Mammary epithelial cell (primary cell): ENCODE measurements at regions of chr1 and their contacts with region 1.

Region 1: GRCh38 chr1:31259746-31260145 is 20.1 kb upstream of the NKAIN1 start:
- DNase-seq: no peak
- H3K4me3 ChIP-seq: no peak overlapping the region
- H3K27ac ChIP-seq: no peak overlapping the region
- H3K4me1 ChIP-seq: no peaks in the 10 kb centered on the region
- H3K27me3 ChIP-seq: no peaks in the 10 kb centered on the region
- CTCF ChIP-seq: no peak

Region 2: DNA sequence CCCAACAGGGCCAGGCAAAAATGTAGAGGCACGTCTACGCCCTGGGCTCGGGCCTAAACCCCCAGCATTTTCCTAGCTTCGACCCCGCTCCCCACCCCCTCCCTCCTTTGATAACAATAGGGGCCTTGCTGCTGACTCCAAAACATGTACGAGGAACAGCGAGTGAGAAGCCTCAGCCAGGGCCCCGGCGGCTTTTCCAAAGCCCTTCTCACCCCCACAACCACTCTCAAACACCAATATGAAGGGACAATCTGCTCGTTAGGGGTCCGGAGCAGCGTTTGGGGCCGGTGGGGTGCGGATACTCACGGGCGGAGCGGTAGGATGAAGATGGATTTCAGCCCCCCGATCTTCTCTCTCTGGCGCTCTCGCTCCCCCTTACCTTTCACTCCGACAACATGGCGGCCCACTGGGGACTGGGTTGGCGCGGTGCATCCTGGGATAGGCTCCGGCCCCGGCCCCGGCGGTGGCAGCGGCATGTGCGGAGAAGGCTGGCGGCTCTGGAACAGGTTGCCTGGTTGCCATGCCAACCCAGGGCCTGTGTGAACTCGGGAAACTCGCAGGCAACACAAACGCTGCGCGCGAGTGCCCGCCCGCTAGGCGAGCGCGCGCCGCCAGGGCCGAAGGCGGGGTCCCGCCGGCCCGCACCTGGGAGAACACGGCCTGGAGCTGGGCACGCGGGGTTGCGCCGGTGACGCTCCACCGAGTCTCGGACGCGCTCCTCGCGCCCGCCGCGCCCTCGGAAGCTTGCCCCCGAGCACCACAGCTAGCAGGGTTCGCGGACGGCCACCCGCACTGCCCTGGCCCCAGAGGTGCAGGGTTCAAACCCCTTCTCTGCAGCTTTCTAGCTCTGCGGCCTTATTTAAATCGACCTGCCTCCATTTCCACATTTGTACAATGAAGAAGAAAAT is 194.2 kb before region 1 on chr1 and contains the start of gene PUM1:
- CTCF ChIA-PET with region 1: no interaction called
- dilution Hi-C with region 1: no loop called
- in situ Hi-C with region 1: no loop called
- intact Hi-C with region 1: no loop called
- DNase-seq: peak; percentile 99
- H3K4me3 ChIP-seq: peak within 1 kb of the TSS; percentile 70 to 72 (median 71)
- H3K27ac ChIP-seq: peak within 1 kb of the TSS; percentile 97
- H3K4me1 ChIP-seq: peaks cover 18% of the 10 kb centered on the region
- H3K27me3 ChIP-seq: no peaks in the 10 kb centered on the region
- CTCF ChIP-seq: no peak
- total RNA-seq, gene PUM1: 91.2 to 107 TPM

Region 3: DNA sequence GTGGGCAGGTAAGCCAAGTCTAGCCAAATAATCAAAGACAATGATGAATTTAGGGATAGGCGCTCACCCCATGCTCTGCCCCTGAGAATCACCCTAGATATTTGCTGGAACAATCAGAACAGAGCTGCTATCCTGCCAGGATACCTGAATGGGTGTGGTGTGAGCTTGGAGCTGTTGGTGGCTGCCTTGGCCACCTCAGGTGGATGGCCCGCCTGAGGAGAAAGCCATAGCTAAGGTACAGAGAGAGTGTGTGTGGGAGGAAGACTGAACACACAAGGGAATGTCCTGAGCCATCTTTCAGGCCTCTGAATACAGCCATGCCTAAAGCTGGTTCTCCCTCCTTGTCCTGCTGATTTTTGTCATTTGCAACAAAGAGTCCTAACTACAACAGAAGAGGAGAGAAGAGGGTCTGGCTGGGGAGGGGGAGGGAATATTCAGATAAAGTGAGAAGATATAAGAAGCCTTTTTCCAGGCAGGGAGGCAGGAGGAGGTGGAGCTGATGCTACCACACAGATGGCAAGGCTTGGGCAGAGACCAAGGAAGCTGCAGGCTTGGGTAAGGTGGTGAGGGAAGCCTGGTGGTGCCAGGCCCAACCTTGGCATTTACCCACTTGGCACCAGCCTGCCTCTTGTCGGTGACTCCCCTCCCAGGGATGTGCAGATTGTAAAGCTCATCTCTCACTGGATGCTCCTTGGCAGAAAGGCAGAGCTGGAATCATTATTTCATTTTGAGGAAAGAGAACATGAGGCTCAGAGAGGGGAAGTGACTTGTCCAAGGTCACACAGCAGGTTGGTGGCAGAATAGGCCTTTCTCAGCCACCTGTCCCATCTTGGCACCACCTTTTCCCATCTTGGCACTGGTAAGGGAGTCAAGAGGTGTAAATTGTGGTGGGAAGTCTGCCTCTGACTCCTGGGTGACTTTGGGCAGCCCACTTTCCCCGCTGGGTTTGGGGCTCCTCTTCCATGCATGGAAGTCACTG is 69.8 kb before region 1 on chr1:
- CTCF ChIA-PET with region 1: interaction called, 19 read pairs
- dilution Hi-C with region 1: loop called (anchors 5 kb)
- in situ Hi-C with region 1: no loop called
- intact Hi-C with region 1: loop called (anchors 5 kb)
- DNase-seq: no peak
- H3K4me3 ChIP-seq: no peak overlapping the region
- H3K27ac ChIP-seq: no peak overlapping the region
- H3K4me1 ChIP-seq: no peaks in the 10 kb centered on the region
- H3K27me3 ChIP-seq: no peaks in the 10 kb centered on the region
- CTCF ChIP-seq: no peak

Region 4: GRCh38 chr1:31397360-31398095 is 137.8 kb after region 1 on chr1:
- CTCF ChIA-PET with region 1: no interaction called
- dilution Hi-C with region 1: no loop called
- in situ Hi-C with region 1: no loop called
- intact Hi-C with region 1: no loop called
- DNase-seq: peak; percentile 56
- H3K4me3 ChIP-seq: no peak overlapping the region
- H3K27ac ChIP-seq: peak overlapping the region; percentile 73
- H3K4me1 ChIP-seq: peaks cover 57% of the 10 kb centered on the region
- H3K27me3 ChIP-seq: no peaks in the 10 kb centered on the region
- CTCF ChIP-seq: no peak